ENCODE measurements at regions of chr18 and their contacts with region 1.

Region 1: DNA sequence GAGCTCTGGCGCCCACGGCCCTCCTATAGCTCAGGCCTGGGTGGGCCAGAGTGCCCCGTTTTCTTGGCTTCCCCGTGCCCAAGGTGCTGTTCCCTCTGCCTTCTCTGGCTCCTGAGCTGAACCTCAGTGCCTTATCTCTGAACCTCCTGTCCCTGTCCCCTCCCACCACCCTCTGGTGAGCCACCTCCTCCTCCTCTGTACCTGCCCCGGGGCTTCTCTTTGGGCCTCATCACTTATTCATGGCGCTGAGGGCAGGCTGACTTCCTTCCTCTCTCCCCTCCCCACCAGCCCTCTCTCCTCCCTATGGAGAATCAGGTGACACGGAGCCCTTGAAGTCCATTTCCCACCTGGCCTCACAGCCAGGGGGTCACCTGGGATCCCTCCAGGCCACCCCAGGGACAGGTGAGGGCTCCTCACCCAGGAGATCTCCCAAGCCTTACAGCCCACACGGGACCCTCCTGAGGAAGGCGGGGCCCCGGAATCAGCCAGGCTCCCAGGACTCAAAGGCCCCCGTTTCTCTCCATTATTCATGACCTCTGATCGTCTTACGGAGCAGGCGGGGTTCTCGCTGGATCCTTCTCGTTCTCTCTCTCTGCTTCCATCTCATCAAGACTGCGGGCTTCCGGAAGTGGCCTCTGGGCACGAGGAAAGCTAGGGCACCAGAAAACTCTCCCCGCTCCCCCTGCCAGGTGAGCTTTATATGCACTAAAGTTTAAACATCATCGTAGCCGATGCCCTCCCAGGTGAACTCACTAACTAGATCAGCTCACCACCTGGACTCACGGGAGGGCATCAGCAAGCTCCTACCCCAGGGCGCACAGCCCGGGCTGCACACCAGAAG is at the start of gene LOXHD1:
- DNase-seq: no peak
- H3K4me3 ChIP-seq: no peak within 1 kb of the TSS
- H3K4me1 ChIP-seq: no peaks in the 10 kb centered on the region
- H3K27me3 ChIP-seq: no peaks in the 10 kb centered on the region

Region 2: DNA sequence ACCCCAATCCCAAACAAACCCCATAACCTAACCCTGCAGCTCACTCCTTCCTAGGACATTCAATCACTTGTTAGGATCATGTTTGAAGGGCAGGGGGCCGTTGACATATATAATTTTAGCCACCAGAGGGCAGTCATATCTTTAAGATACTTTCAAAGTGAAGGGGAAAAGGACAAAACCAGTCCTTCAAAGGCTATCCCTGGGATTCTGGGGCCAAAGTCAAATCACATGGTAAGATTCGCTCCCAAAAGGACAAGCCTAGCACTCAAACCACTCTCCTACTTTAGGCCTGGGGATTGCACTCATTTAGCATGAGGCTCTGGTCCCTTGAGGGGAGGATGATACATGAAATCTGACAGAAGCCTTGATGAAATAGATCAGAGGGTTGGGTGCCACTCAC is 508.5 kb before region 1 on chr18:
- in situ Hi-C with region 1: loop called (anchors 5 kb)
- DNase-seq: peak; percentile 72 to 74
- H3K4me3 ChIP-seq: no peak overlapping the region
- H3K4me1 ChIP-seq: no peaks in the 10 kb centered on the region
- H3K27me3 ChIP-seq: no peaks in the 10 kb centered on the region

Region 3: DNA sequence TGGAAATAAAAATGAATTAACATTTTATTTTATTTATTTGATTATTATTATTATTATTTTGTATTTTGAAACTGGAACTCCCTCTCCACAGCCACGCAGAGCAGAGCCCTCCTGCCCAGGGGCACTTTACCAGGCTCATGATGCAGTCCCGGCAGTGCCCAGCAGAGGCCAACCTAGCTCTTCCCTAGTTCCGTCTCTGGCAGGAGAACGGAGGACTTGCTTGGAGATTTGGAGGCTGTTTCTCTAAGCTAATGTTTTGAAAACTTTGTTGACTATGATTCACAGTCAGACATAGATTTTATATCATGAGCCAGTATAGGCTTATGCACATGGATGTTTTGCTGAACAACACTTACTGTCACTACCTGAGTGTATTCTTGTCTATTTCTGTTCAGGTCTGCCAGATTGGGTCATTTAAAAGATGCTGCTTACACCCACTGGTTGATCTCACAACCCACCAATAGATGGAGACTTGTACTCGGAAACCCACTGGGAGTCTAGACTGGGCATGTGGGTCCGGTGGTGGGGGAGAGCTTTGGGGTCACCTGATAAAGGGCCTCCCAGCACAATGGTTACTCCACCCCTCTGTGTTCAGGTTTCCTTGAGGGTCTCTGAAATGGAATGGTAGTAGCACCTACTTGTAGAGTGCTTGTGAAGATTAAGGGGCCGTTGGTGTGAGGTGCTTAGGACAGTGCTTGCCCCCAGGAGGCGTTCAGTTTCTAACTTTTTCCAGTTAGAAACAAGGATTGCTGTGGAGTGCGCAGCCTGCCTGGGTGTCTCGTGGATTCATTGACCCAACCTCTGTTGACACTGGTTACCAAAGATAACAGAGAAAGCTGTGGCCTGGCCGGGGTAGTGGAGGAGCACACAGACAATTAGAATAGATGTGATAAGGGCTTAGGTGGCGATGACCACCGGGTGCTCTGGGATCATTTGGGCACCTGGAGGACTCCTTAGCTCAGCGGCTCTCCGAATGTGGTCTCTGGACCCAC is 375.9 kb before region 1 on chr18:
- in situ Hi-C with region 1: loop called (anchors 5 kb)
- DNase-seq: peak; percentile 81 to 85
- H3K4me3 ChIP-seq: no peak overlapping the region
- H3K4me1 ChIP-seq: no peaks in the 10 kb centered on the region
- H3K27me3 ChIP-seq: no peaks in the 10 kb centered on the region

Region 4: GRCh38 chr18:47448956-47449355 is 791.6 kb after region 1 on chr18:
- in situ Hi-C with region 1: no loop called
- DNase-seq: no peak
- H3K4me3 ChIP-seq: no peak overlapping the region
- H3K4me1 ChIP-seq: no peaks in the 10 kb centered on the region
- H3K27me3 ChIP-seq: no peaks in the 10 kb centered on the region